ENCODE measurements at regions of chr7 and their contacts with region 1.

Region 1: DNA sequence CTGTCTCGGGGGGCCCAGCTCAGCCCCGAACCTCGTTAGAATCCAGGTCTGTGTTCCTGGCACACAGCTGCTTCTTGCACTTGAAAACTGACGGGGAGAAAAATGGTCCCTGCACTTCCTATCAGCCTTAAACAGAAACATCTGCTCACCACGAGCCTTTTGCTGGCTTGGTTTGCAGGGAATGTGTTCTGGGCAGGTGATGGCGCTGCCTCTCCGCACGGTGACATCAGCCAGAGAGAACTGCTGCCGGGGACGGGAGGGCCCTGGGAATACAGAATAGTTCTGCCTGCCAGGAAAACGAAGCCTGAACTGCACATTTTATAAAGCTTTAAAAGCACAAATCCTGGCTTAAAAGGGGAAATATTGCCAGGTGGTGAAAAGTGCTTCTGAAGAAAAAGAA is 622.5 kb downstream of the TYW1 start:
- DNase-seq: peak; percentile 19 to 35
- ATAC-seq: peak in 6 of 8 donors; percentile 51 to 92 (median 67)
- H3K4me3 ChIP-seq: peak overlapping the region in 1 of 10 donors; percentile 24
- H3K27ac ChIP-seq: peak overlapping the region in 7 of 10 donors; percentile 1 to 77 (median 58)
- H3K4me1 ChIP-seq: peaks cover 0 to 43% (median 10%) of the 10 kb centered on the region in 9 donors
- H3K27me3 ChIP-seq: peaks cover 0 to 67% (median 29%) of the 10 kb centered on the region in 7 donors
- CTCF ChIP-seq: peak in 3 of 9 donors; percentile 23 to 39 (median 24)

Region 2: DNA sequence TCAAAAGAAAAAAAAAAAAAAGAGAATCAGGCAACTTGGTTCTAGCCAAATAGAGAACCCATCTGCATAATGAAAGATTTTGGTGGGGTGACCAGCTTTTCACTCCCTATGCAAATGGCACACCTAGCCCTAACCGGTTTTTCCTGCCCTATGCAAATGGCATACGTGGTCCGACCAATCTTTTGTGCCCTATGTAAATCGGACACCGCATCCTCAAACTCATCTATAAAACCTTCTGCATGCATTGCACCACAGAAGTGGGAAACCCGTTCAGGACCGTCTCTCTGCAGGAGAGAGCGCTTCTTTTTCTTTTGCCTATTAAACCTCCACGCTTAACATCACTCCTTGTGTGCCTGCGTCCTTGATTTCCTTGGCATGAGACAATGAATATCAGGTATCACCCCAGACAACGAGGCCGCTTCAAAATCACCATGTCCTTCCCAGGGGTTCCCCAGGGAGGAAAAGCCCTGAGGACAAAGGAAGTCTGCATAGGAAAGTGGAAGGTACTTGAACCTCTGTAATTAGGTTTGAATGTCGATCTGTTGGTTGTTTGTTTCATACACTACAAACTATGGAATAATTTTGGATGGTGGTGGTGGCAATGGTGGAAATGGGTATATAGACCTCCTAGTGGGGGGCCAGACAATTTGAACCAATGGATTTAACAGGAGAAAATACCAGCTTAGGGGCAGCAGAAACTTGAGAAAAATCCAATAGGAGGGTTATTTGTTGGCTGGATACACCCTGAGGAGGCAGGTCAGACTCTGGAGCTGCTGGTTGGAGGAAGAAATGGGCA is 226.3 kb before region 1 on chr7:
- intact Hi-C with region 1: no loop called
- DNase-seq: no peak
- ATAC-seq: no peak
- H3K4me3 ChIP-seq: no peak overlapping the region
- H3K27ac ChIP-seq: no peak overlapping the region
- H3K4me1 ChIP-seq: no peaks in the 10 kb centered on the region
- H3K27me3 ChIP-seq: peaks cover 0 to 14% (median 0%) of the 10 kb centered on the region in 7 donors
- CTCF ChIP-seq: no peak

Region 3: GRCh38 chr7:67518580-67518979 is 100.6 kb before region 1 on chr7:
- intact Hi-C with region 1: loop called in 2 of 10 experiments (anchors 1 to 10 kb)
- DNase-seq: peak; percentile 47 to 85
- ATAC-seq: peak; percentile 75 to 97 (median 94)
- H3K4me3 ChIP-seq: no peak overlapping the region
- H3K27ac ChIP-seq: peak overlapping the region in 7 of 10 donors; percentile 20 to 75 (median 55)
- H3K4me1 ChIP-seq: peaks cover 0 to 35% (median 29%) of the 10 kb centered on the region in 9 donors
- H3K27me3 ChIP-seq: no peaks in the 10 kb centered on the region
- CTCF ChIP-seq: no peak

Region 4: DNA sequence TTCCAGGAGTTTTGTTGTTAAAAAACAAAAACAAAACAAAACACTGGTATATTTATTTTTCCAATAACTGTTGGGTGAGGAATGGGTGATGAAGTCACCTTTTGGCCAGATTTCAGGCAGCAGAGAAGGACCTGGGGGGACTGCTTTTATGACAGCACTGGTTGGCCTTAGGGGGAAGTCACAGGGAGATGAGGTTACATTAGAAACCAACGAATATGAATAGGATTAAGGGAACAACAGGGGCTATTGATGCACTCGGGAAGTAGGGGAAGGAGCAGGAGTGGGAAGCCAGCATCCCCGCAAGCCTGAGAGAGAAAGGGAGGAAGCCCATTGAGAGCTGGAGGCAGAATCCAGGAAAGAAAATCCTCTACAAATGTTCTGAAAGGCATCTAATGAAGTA is 335.9 kb after region 1 on chr7:
- intact Hi-C with region 1: no loop called
- DNase-seq: no peak
- ATAC-seq: no peak
- H3K4me3 ChIP-seq: no peak overlapping the region
- H3K27ac ChIP-seq: no peak overlapping the region
- H3K4me1 ChIP-seq: no peaks in the 10 kb centered on the region
- H3K27me3 ChIP-seq: peaks cover 0 to 8% (median 0%) of the 10 kb centered on the region in 7 donors
- CTCF ChIP-seq: no peak